Psoas muscle (tissue), 8 donors: ENCODE measurements at regions of chr5 and their contacts with region 1.

Region 1: GRCh38 chr5:142769741-142770631 is at the start of gene ARHGAP26:
- DNase-seq: peak; percentile 97 to 98
- ATAC-seq: peak; percentile 98 to 99 (median 99)
- H3K4me3 ChIP-seq: peak within 1 kb of the TSS; percentile 90
- H3K27ac ChIP-seq: peak within 1 kb of the TSS; percentile 80
- H3K4me1 ChIP-seq: peaks cover 16% of the 10 kb centered on the region
- H3K27me3 ChIP-seq: no peaks in the 10 kb centered on the region
- CTCF ChIP-seq: peak; percentile 32
- total RNA-seq, gene ARHGAP26: 12.0 to 28.7 (median 13.1) TPM

Region 2: DNA sequence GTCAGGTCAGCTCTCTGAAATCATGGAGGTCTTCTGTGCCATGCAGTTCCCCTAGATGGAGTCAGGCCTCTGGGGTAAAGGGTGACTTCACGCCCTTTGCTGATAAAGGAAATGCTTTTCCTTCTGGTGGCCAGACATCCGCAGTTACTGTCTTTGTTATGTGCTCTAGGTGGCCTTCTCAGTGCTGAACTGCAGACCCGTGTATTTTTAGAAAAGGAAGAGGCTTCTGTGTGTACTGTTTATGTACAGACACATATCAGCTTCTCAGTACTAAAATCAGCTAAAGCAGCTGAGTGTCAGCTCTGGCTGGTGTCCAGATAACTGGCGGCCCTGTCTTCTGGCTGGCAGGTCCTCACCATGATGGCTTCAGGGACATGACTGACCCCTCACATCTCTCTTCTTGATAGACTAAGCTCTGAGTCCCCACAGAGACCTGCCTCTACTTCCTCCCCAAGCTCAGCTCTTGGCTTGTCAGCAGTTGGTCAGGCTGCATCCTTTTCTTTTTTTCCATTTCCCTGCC is 75.5 kb after region 1 on chr5:
- intact Hi-C with region 1: loop called in 1 of 2 experiments (anchors 2 kb)
- DNase-seq: no peak
- ATAC-seq: peak in 3 of 4 donors; percentile 14 to 47 (median 29)
- H3K4me3 ChIP-seq: no peak overlapping the region
- H3K27ac ChIP-seq: no peak overlapping the region
- H3K4me1 ChIP-seq: peaks cover 48% of the 10 kb centered on the region
- H3K27me3 ChIP-seq: no peaks in the 10 kb centered on the region
- CTCF ChIP-seq: no peak

Region 3: GRCh38 chr5:142865414-142866045 is 95.5 kb after region 1 on chr5:
- intact Hi-C with region 1: loop called in 1 of 2 experiments (anchors 2 kb)
- DNase-seq: no peak
- ATAC-seq: no peak
- H3K4me3 ChIP-seq: no peak overlapping the region
- H3K27ac ChIP-seq: no peak overlapping the region
- H3K4me1 ChIP-seq: peaks cover 19% of the 10 kb centered on the region
- H3K27me3 ChIP-seq: no peaks in the 10 kb centered on the region
- CTCF ChIP-seq: no peak